Transverse colon (tissue), 4 donors: ENCODE measurements at regions of chr12 and their contacts with region 1.

Region 1: DNA sequence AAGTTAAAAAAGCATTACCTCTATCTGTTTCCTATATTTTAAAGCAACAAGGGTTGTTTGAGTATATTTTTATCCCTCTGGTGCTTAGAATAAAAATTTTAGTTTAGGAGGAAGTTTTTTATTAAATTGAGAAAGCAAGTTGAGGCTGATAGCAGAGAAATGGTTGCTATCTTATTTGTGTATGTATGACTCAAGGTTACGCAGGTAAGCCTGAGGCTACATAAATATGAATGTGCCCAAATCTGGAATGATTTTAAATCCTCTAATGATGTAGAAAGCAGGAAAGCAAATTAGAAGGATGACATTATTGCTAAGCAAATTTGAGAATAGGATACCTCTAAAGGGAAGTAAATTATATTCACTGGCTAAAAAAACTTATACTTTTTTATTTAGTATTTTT is 109.8 kb downstream of the ACSS3 start:
- DNase-seq: no peak
- H3K4me3 ChIP-seq: no peak overlapping the region
- H3K27ac ChIP-seq: no peak overlapping the region
- H3K4me1 ChIP-seq: no peaks in the 10 kb centered on the region
- H3K27me3 ChIP-seq: no peaks in the 10 kb centered on the region
- CTCF ChIP-seq: no peak
- EP300 ChIP-seq: no peak
- POLR2A ChIP-seq: no peak

Region 2: DNA sequence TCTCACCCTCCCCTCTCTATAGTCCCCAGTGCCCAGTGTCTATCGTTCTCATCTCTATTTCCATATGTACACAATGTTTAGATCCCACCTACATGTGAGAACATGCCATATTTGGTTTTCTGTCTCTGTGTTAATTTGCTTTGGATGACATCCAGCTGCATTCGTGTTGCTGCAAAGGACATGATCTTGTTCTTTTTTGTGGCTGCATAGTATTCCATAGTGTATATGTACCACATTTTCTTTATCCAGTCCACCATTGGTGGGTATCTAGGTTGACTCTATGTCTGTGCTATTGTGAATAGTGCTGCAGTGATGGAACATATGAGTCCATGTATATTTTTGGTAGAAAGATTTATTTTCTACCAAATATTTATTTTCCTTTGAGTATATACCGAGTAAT is 64.1 kb before region 1 on chr12:
- in situ Hi-C with region 1: no loop called
- intact Hi-C with region 1: loop called (anchors 2 kb)
- DNase-seq: no peak
- H3K4me3 ChIP-seq: no peak overlapping the region
- H3K27ac ChIP-seq: no peak overlapping the region
- H3K4me1 ChIP-seq: no peaks in the 10 kb centered on the region
- H3K27me3 ChIP-seq: no peaks in the 10 kb centered on the region
- CTCF ChIP-seq: no peak
- EP300 ChIP-seq: no peak
- POLR2A ChIP-seq: no peak